Upper lobe of right lung (tissue), 1 donor: ENCODE measurements at regions of chr6 and their contacts with region 1.

Region 1: DNA sequence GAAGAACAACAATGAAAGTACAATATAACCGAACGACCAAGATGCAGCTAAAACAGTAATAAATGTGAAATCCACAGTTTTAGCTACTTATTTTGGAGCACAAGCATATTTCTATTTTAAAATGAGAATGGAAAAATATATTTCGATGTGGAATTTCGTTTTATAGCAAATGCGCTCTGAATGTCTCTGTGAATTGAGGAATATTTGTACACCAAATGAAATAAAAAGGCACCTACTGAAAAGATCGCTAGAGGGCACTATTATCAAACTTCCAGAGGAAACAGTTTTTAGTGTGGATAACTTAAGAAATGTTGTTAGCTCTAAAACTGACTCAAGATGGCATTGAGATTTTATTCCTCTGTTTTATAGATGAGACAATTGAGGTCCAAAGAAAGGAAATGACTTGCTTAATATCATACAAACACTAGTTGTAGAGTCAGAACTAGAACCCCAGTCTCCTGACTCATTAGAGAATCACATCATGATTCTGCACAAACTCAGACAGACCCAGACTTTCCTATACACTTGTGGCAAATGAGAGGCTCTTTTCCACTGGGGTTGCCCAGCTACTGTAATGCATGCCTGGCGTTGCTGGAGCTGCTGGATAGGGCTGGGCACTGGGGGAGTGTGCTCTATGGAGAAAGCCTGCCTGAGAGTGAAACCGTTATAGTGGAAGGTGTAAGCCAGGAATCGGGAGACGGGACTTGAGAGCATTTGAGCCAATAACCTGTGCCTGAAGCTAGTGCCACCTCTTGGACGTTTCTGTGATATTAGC is 51.9 kb downstream of the GCLC start:
- DNase-seq: no peak
- ATAC-seq: peak; percentile 69
- H3K4me3 ChIP-seq: no peak overlapping the region
- H3K27ac ChIP-seq: no peak overlapping the region
- H3K4me1 ChIP-seq: no peaks in the 10 kb centered on the region
- H3K27me3 ChIP-seq: peaks cover 9% of the 10 kb centered on the region
- CTCF ChIP-seq: peak; percentile 81

Region 2: DNA sequence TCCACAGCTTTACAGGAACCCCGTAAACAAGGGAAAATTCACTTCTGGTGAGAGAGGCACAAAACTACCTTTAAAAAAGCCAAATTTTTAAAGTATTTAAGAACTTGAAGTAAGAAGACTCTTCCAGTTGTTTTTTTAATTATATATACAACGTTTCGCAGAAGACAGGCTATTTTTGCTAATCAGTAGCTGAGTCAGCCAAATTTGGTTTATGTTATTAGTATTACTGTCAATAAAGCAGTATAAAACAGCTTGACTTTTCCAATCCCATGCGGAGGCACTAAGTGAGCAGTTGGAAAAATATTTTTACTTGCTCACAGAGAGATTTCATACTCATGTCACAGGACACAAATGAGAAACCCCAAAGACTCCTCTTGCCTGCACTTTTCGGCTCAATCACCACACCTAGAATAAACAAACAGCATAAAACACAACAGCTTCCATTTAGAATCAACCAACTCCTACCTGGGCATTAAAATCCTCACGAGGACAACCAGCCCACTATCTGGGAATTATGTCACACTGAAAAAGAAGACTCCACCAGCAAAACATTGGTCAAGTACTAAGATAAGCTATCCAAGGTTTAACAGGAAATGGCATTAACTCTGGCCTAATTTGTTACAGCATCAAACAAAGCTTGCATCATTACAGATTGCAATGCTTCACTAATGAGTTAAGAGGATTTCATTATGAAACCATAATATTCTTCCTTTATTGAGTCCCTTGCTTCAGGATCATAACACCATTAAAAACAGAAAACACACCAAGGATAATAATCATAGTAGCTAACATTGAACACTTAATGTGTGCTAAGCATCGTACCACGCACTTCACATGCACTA is 170.6 kb before region 1 on chr6:
- intact Hi-C with region 1: no loop called
- DNase-seq: no peak
- ATAC-seq: no peak
- H3K4me3 ChIP-seq: no peak overlapping the region
- H3K27ac ChIP-seq: no peak overlapping the region
- H3K4me1 ChIP-seq: peaks cover 35% of the 10 kb centered on the region
- H3K27me3 ChIP-seq: no peaks in the 10 kb centered on the region
- CTCF ChIP-seq: no peak

Region 3: DNA sequence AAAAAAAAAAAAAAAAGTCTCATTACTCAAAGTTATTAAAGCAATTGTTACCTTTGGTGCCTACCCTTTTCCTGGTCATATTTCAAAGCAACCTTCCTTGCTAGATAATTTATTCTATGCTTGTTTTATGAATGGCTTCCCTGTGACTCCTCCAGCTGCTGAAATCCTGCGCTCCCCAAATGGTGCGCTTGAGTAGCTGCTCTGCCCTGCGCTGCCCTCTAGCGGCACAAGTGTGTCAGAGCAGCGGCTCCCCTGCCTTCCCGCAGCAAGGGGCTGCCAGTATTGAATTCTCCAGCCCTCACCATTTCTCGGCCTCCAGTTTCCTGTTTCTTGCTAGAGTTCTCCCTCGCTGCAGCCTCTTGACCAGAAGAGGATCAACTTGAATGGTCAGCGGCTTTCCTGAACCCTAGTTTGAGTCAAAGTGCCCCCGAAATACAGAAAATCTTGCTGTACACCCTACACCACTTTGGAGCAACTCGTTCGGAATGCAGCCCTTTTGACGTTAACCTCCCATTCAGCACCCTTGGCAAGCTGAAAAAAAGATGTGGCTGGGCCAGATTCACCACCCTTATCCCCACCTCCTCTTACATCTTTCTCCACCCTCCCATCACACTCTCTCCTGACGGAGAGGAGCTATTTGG is 232.9 kb after region 1 on chr6:
- intact Hi-C with region 1: loop called (anchors 10 kb)
- DNase-seq: peak; percentile 87
- ATAC-seq: peak; percentile 95
- H3K4me3 ChIP-seq: no peak overlapping the region
- H3K27ac ChIP-seq: no peak overlapping the region
- H3K4me1 ChIP-seq: no peaks in the 10 kb centered on the region
- H3K27me3 ChIP-seq: no peaks in the 10 kb centered on the region
- CTCF ChIP-seq: peak; percentile 99